Vagina (tissue), 2 donors: ENCODE measurements at regions of chr12 and their contacts with region 1.

Region 1: DNA sequence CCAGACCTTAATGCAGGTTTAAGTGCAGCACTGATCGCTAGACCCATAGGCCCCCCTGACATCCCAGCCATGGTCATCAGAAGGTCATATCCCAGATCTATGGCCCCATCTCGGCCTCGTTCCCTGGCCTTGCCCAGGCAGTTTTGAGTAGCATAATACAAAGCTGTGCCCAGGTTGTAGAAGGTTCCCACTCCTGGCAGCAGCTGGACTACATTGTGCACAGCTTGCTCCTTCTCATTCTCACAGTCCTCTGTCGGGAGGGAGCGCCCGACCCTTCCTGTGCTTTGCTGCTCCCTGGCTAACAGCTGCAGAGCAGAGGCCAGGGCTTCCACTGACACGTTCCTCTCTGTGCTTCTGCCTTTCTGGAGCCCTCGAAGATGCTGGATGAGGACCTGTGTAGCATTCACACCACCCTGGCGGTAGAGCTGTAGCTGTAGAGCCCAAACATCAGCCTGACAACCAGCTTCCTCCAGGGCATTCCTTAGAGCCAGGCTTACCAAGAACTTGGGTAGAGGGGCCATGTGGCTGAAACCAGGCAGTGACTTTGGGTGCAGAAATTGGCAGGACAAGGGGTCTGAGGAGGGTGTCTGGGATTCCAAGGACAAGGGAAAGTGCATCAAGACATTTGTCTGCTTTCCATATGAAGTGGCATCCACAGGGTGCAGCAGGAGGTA is 1.1 kb downstream of the APOF start:
- DNase-seq: no peak
- H3K4me3 ChIP-seq: no peak overlapping the region
- H3K27ac ChIP-seq: no peak overlapping the region
- H3K4me1 ChIP-seq: peaks cover 24% of the 10 kb centered on the region
- H3K27me3 ChIP-seq: no peaks in the 10 kb centered on the region
- CTCF ChIP-seq: no peak
- POLR2A ChIP-seq: no peak

Region 2: DNA sequence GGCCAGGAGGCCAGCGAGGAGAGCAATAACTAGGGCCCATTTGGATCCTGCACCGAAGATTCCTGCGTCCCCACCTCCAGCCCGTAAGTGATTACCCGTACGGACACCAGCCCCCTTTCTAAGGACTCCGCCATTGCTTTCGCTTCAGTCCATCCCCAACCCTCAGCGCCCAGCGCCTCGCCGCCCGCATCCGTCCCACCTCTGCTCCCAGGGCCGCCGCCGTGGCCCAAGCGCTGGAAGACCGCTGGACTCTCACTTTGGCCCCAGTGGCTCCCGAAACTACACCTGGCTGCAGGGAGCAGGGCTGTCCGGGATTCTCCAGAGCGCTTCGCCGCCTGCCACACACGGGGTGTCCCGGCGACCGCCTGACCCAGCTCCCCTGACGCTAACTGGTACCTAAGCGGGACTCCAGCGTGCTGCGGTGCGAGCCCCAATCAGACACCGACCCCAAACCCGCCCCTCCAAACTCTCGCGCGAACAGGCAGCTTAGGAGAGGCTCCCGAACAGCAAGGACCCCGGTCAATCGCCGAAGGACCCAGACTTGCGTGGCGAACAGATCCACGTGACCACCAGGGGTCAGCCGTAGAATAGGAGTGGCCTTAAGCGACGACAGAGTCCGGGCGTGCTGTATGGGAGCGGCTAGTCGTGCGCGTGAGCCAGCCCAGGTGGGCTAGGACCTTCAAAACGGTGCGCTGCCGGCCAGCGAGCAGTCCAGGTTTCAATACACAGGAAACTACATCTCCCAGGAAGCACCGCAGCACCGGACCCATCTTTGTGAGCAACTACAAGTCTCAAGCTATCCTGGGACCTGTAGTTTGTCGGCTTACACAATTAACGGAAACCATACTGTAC is 45.7 kb before region 1 on chr12 and contains the start of gene CNPY2:
- intact Hi-C with region 1: loop called (anchors 1 kb)
- DNase-seq: peak in 1 of 2 donors; percentile 96
- H3K4me3 ChIP-seq: peak within 1 kb of the TSS; percentile 53 to 81
- H3K27ac ChIP-seq: peak within 1 kb of the TSS; percentile 78
- H3K4me1 ChIP-seq: peaks cover 8% of the 10 kb centered on the region
- H3K27me3 ChIP-seq: no peaks in the 10 kb centered on the region
- CTCF ChIP-seq: no peak
- POLR2A ChIP-seq: peak in 1 of 2 donors; percentile 35
- total RNA-seq, gene CNPY2: 65.6 TPM